CD4-positive, alpha-beta T cell (primary cell): ENCODE measurements at regions of chr2 and their contacts with region 1.

Region 1: DNA sequence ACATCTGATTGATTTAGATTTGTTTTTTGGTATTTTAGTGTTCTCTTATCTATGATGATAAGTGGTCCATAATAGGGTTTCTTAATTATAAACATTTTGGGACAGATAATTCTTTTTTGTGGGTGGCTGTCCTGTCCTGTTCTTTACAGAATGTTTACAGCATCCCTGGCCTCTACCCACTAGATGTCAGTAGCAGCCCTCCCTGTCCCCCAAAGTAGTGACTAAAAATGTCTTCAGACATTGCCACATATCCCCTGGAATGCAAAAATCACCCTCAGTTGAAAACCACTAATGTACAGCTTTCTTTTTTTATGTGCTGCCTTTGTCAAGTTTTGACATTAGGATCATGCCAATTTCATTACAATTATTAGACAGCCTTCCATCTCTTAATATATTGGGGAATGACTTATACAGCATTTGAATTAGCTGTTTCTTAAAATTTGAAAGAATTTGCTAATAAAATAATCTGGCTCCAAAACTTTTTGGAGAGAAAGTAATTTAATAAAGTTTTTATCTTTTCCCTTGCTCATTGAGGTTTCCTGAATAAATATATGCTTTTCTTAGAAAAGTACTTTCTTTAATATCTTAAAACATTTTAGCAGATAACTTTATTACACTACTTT is 19.5 kb downstream of the WIPF1 start:
- DNase-seq: peak in 12 of 14 experiments; percentile 26 to 85 (median 51)
- ATAC-seq: peak; percentile 82
- H3K4me3 ChIP-seq: no peak overlapping the region
- H3K4me3 Mint-ChIP-seq: no peak overlapping the region
- H3K27ac ChIP-seq: no peak overlapping the region
- H3K27ac Mint-ChIP-seq: peak overlapping the region; percentile 95
- H3K4me1 ChIP-seq: peaks cover 56% of the 10 kb centered on the region
- H3K4me1 Mint-ChIP-seq: peaks cover 94% of the 10 kb centered on the region
- H3K27me3 ChIP-seq: no peaks in the 10 kb centered on the region
- H3K27me3 Mint-ChIP-seq: no peaks in the 10 kb centered on the region
- CTCF ChIP-seq: peak; percentile 75

Region 2: DNA sequence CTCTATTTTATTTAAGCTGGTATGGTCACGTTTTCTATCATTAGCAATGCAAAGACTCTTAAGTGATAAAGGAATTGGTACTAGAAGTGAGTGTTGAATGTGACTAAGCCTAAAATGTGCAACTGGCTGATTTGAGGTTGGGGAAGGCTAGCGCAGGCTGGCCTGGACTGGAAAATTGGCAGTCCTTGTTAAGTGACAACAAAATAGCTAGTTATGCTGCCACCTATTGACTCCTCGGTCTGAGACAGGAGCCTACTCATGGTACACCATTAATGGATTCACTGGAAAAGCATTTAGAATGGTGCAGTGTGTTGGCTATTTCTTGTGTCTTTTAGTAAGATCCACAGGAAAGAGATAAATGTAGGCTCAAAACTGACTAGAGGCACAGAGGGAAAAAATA is 25.2 kb after region 1 on chr2:
- CTCF ChIA-PET with region 1: interaction called, 243 read pairs
- POLR2A ChIA-PET with region 1: interaction called, 19 read pairs
- intact Hi-C with region 1: loop called in 1 of 2 experiments (anchors 1 kb)
- DNase-seq: peak in 12 of 14 experiments; percentile 19 to 85 (median 50)
- ATAC-seq: peak; percentile 66
- H3K4me3 ChIP-seq: no peak overlapping the region
- H3K4me3 Mint-ChIP-seq: peak overlapping the region; percentile 28
- H3K27ac ChIP-seq: no peak overlapping the region
- H3K27ac Mint-ChIP-seq: peak overlapping the region; percentile 95
- H3K4me1 ChIP-seq: peaks cover 69% of the 10 kb centered on the region
- H3K4me1 Mint-ChIP-seq: peaks cover 85% of the 10 kb centered on the region
- H3K27me3 ChIP-seq: no peaks in the 10 kb centered on the region
- H3K27me3 Mint-ChIP-seq: no peaks in the 10 kb centered on the region
- CTCF ChIP-seq: peak; percentile 84

Region 3: DNA sequence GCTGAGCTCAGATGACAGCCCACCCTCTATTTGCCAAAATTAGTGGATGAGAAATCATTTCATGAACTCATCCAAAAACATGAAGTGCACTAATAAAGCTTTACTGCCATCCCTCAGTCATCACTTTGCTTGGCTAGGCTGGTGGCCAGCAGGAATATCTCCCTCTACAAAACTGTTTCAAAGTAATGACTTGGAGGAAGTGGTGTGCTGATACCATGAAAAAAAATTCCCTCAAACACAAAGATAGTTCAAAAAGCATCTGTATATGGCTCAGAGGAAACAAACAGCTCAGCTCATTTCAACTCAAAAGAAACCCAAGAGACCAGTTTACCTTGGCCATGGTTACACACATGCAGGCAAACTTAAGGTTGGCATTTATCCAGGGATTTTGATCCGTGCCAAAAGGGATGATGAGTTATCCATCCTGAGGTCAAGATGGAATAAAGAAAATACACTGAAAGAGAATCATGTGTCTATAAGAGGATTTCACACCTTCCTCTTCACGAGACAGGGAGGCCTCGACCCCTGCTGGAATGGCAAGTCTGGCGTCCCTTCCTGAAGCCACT is 37.9 kb after region 1 on chr2:
- CTCF ChIA-PET with region 1: interaction called, 5 read pairs
- POLR2A ChIA-PET with region 1: interaction called, 4 read pairs
- intact Hi-C with region 1: loop called in 1 of 2 experiments (anchors 5 kb)
- DNase-seq: peak in 3 of 14 experiments; percentile 40 to 55 (median 44)
- ATAC-seq: peak; percentile 67
- H3K4me3 ChIP-seq: no peak overlapping the region
- H3K4me3 Mint-ChIP-seq: peak overlapping the region; percentile 23
- H3K27ac ChIP-seq: peak overlapping the region in 1 of 2 donors; percentile 53
- H3K27ac Mint-ChIP-seq: peak overlapping the region; percentile 86
- H3K4me1 ChIP-seq: peaks cover 45% of the 10 kb centered on the region
- H3K4me1 Mint-ChIP-seq: peaks cover 97% of the 10 kb centered on the region
- H3K27me3 ChIP-seq: no peaks in the 10 kb centered on the region
- H3K27me3 Mint-ChIP-seq: no peaks in the 10 kb centered on the region
- CTCF ChIP-seq: no peak

Region 4: DNA sequence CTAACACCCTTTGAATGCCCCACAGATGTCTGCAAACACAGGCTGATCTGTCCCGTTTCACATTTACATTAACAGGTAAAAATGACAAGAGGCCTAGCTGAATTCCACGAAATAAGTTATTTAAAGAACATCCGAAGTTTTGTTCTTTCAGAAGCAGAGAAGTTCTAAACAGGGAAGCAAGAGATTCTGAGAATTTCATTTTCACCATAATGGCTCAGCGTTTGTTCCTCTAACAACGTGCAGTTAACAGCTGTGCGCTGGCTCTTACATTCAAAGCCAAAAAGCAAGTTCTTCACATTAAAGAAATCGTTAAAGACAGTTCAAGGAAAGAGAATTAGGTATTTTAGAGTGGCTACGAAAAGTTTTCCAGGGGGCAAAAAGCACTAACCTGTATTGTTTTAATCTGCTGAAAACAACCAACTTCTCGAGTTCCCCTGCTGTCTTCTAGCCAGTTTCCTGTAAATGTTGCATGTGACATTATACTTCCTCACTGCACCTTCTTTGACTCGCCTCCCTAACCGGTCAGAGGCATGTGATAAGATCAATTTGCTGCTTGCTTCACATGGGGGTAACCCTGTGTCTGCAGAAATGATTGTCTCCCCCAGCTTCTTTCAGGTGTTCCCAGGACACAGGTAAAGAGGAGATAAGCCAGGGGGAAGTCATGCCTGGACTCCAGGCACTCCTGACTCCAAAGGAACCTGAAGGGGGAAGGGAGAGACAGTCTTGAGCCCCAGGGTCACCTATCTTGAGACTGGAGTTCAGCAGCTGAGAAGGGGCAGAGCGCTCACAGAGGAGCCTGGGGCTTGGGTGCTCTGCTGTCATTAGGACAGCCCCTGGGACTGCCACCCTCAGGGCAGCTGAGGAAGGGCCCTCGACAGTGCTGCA is 56.3 kb after region 1 on chr2:
- CTCF ChIA-PET with region 1: interaction called, 8 read pairs
- POLR2A ChIA-PET with region 1: interaction called, 3 read pairs
- intact Hi-C with region 1: loop called in 1 of 2 experiments (anchors 5 kb)
- DNase-seq: peak in 13 of 14 experiments; percentile 11 to 80 (median 41)
- ATAC-seq: peak; percentile 67
- H3K4me3 ChIP-seq: peak overlapping the region; percentile 73
- H3K4me3 Mint-ChIP-seq: peak overlapping the region; percentile 94
- H3K27ac ChIP-seq: peak overlapping the region; percentile 77 to 79
- H3K27ac Mint-ChIP-seq: peak overlapping the region; percentile 95
- H3K4me1 ChIP-seq: peaks cover 32% of the 10 kb centered on the region
- H3K4me1 Mint-ChIP-seq: peaks cover 68% of the 10 kb centered on the region
- H3K27me3 ChIP-seq: no peaks in the 10 kb centered on the region
- H3K27me3 Mint-ChIP-seq: no peaks in the 10 kb centered on the region
- CTCF ChIP-seq: no peak

Region 5: GRCh38 chr2:174688079-174688478 is 110.0 kb after region 1 on chr2:
- CTCF ChIA-PET with region 1: interaction called, 58 read pairs
- POLR2A ChIA-PET with region 1: interaction called, 3 read pairs
- intact Hi-C with region 1: loop called (anchors 1 kb)
- DNase-seq: peak in 3 of 14 experiments; percentile 59 to 70 (median 69)
- ATAC-seq: peak; percentile 73
- H3K4me3 ChIP-seq: no peak overlapping the region
- H3K4me3 Mint-ChIP-seq: peak overlapping the region; percentile 0
- H3K27ac ChIP-seq: no peak overlapping the region
- H3K27ac Mint-ChIP-seq: peak overlapping the region; percentile 11
- H3K4me1 ChIP-seq: peaks cover 11% of the 10 kb centered on the region
- H3K4me1 Mint-ChIP-seq: peaks cover 14% of the 10 kb centered on the region
- H3K27me3 ChIP-seq: no peaks in the 10 kb centered on the region
- H3K27me3 Mint-ChIP-seq: no peaks in the 10 kb centered on the region
- CTCF ChIP-seq: peak; percentile 63